Prostate gland (tissue), 2 donors: ENCODE measurements at regions of chr15 and their contacts with region 1.

Region 1: GRCh38 chr15:38828031-38828532 is 263.5 kb upstream of the RASGRP1 start:
- DNase-seq: no peak
- H3K4me3 ChIP-seq: no peak overlapping the region
- H3K27ac ChIP-seq: no peak overlapping the region
- H3K4me1 ChIP-seq: no peaks in the 10 kb centered on the region
- H3K27me3 ChIP-seq: no peaks in the 10 kb centered on the region
- CTCF ChIP-seq: no peak
- POLR2A ChIP-seq: no peak

Region 2: DNA sequence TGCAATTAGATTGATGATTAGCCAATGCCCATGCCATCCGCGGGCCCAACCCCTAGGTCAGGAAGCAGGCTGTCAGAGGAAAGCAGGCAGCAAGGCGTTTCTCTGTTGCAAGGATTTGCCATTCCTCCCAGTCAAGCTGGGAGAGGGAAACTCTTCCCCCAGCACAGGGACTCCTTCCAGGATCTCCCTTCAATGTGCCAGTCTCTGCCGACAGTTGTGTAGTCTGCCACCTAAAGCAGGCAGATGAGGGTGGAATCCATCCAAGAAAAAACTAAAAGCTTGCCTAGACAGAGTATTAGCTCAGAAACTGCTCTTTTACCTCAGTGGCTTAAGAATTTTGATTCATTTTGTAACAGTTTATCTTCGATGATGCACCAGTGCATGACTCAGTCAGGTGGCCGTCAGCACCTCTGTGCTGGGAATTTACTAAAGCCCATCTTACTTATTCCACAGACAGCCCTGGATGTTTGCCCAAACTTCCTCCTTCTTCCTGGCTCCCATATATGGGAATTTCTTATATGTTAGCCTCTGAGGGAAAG is 251.3 kb after region 1 on chr15:
- intact Hi-C with region 1: loop called (anchors 10 kb)
- DNase-seq: no peak
- H3K4me3 ChIP-seq: no peak overlapping the region
- H3K27ac ChIP-seq: no peak overlapping the region
- H3K4me1 ChIP-seq: no peaks in the 10 kb centered on the region
- H3K27me3 ChIP-seq: no peaks in the 10 kb centered on the region
- CTCF ChIP-seq: no peak
- POLR2A ChIP-seq: no peak

Region 3: DNA sequence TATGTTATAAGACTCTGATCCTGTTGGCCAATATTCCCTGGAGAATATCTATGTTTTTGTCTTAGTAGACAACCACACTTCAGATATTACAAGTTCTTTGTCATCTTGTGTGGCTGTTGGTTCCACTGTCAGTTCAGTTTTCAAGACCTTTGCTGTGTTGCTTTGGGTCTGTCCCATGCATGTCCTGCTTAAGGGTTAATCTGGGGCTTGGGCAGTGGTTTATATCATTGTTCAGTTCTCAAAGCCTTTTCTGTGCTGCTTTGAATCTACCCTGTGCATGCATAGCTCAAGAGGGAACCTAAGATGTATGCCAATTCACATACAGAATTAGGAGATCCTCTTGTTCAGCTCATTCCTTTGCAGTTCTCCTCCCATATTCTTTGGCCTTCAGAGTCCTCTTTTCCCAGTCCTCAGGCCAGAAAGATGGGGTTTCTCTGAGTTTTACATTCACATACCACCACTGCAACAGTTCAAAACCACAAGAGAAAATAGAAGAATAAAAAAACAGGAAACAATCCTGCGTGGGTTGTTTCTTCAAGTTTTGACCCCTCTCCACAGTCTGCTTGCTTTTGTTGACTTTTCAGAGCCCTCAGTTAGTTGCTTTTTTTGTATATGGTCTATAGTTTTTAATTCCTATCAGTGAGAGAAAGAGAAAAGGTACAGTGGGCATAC is 1354.4 kb after region 1 on chr15:
- intact Hi-C with region 1: no loop called
- DNase-seq: no peak
- H3K4me3 ChIP-seq: no peak overlapping the region
- H3K27ac ChIP-seq: no peak overlapping the region
- H3K4me1 ChIP-seq: no peaks in the 10 kb centered on the region
- H3K27me3 ChIP-seq: no peaks in the 10 kb centered on the region
- CTCF ChIP-seq: no peak
- POLR2A ChIP-seq: no peak